Activated T-helper 1 cell treated with anti-CD3 and anti-CD28 coated beads, Interleukin-12 subunit alpha, Interleukin-12 subunit beta, Interleukin-2, Interleukin-4 antibody, amounts not matched to agents 30 ng/mL and 10 ng/mL and 1 ng/mL, durations not matched to agents 14 hours and 24 hours and 36 hours (primary cell): ENCODE measurements at regions of chr1 and their contacts with region 1.

Region 1: DNA sequence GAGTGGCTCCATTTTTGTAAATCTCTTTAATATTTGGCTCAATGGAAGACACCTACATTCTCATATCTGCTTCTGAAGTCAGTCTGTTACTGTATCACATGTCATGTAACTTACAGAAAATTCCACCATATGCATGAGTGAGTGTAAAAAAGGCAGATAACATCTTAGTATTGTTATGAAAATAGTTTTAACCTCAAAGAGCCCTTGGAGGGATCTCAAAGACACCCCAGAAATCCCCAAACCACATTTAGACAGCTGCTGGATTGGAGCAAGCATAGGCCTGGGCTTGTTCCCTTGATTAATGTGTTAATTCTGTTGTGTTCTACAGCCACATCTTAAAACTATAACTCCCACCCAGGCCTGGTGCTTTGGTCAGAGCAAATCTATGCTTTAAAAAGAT is 16.9 kb downstream of the MACO1 start:
- DNase-seq: peak; percentile 30
- H3K4me3 Mint-ChIP-seq: no peak overlapping the region
- H3K27ac Mint-ChIP-seq: peak overlapping the region; percentile 63
- H3K4me1 Mint-ChIP-seq: peaks cover 31% of the 10 kb centered on the region
- H3K27me3 Mint-ChIP-seq: peaks cover 2% of the 10 kb centered on the region

Region 2: GRCh38 chr1:25467193-25467592 is 19.6 kb after region 1 on chr1:
- intact Hi-C with region 1: loop called (anchors 2 kb)
- DNase-seq: peak; percentile 19
- H3K4me3 Mint-ChIP-seq: peak overlapping the region; percentile 7
- H3K27ac Mint-ChIP-seq: peak overlapping the region; percentile 19
- H3K4me1 Mint-ChIP-seq: peaks cover 27% of the 10 kb centered on the region
- H3K27me3 Mint-ChIP-seq: no peaks in the 10 kb centered on the region

Region 3: GRCh38 chr1:25476186-25477097 is 28.9 kb after region 1 on chr1:
- intact Hi-C with region 1: loop called (anchors 1 kb)
- DNase-seq: no peak
- H3K4me3 Mint-ChIP-seq: no peak overlapping the region
- H3K27ac Mint-ChIP-seq: peak overlapping the region; percentile 72
- H3K4me1 Mint-ChIP-seq: peaks cover 46% of the 10 kb centered on the region
- H3K27me3 Mint-ChIP-seq: no peaks in the 10 kb centered on the region